Activated CD4-positive, alpha-beta T cell treated with anti-CD3 and anti-CD28 coated beads, Interleukin-2, amount 10 ng/mL, durations not matched to agents 24 days and 14 days (primary cell): ENCODE measurements at regions of chr5 and their contacts with region 1.

Region 1: DNA sequence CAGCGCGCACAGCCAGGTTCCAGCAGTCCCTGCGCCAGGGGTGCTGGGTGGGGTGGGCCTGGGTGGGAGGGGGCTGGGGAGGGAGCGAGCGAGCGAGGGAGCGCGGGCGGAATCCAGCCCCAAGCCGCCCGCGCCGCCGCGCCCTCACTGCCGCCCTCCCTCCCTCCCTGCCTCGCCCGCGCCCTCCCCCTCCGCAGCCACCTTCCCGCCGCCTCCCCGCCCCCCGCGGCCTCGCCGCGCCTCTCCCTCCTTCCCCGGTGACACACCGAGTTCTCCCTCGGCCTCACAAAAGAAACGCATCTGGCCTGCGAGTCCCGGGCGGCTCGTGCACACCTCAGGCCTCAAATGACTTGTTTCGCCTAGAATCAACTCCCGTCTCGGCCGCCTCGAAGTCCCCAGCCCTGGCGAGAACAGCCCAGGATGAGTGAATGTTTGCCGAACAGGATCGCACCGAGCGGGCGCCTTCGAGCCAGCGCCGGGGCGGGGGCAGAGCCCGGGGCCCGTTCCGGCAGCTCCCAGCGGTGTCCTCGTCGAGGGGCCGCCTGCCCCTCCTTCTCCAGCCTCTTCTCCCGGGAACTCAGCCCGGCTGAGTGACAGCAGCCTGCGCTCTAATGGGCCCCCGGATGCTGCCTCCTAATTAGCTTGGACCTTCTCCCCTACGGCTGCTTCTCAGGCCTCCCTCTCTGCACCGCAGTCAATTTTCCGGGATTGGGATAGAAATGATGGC is 371 bp upstream of the PITX1 start:
- DNase-seq: peak; percentile 64
- H3K4me3 Mint-ChIP-seq: peak overlapping the region; percentile 87
- H3K27ac Mint-ChIP-seq: peak overlapping the region; percentile 81
- H3K4me1 Mint-ChIP-seq: peaks cover 26% of the 10 kb centered on the region
- H3K27me3 Mint-ChIP-seq: peaks cover 79% of the 10 kb centered on the region

Region 2: DNA sequence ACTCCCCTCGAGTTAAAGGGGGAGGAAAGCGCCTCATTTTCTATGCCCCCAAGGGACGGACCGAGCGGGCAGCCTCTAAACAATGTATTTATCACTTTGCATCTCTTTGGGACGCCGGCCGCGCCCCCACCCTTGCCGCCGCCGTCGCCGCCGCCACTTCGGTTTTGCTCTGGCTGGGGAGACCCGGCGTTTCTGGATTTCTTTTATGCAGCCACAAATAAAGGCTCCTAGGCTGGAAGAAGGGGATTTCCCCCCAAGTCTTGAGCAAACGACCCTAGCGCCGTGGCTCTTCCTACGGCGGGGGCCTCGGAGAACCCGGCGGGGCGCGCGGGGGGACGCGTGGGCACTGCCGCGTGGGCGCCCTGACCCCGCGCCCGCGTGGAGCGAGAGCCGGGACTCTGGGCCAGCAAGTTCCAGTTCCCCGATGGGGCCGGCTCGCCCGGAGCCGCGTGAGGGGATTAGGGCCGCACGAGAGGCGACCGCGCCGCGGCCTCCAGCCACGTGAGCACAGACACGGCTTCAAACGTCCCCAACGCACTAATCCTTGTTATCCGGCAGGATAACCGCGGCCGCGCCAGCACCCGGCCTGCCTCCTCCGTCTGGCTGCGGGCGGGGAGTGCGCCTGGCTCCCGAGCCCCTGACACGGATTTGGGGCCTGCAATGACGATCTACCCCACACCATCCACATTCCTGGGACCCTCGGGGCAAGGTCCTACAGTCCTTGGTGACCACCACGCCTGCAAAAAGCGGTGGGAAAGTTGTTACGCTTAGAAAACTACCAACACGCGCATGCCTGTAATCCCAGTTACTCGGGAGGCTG is 509.3 kb after region 1 on chr5:
- intact Hi-C with region 1: loop called (anchors 5 kb)
- DNase-seq: no peak
- H3K4me3 Mint-ChIP-seq: peak overlapping the region; percentile 87
- H3K27ac Mint-ChIP-seq: no peak overlapping the region
- H3K4me1 Mint-ChIP-seq: peaks cover 9% of the 10 kb centered on the region
- H3K27me3 Mint-ChIP-seq: peaks cover 88% of the 10 kb centered on the region